Activated naive CD4-positive, alpha-beta T cell treated with anti-CD3 and anti-CD28 coated beads, Interleukin-2, amount 10 ng/mL, durations not matched to agents 7 days and 5 days (primary cell): ENCODE measurements at regions of chr12 and their contacts with region 1.

Region 1: GRCh38 chr12:100154474-100155247 is 12.0 kb upstream of the BLTP3B start:
- DNase-seq: peak; percentile 82
- H3K4me3 Mint-ChIP-seq: no peak overlapping the region
- H3K27ac Mint-ChIP-seq: no peak overlapping the region
- H3K4me1 Mint-ChIP-seq: peaks cover 6% of the 10 kb centered on the region
- H3K27me3 Mint-ChIP-seq: no peaks in the 10 kb centered on the region

Region 2: DNA sequence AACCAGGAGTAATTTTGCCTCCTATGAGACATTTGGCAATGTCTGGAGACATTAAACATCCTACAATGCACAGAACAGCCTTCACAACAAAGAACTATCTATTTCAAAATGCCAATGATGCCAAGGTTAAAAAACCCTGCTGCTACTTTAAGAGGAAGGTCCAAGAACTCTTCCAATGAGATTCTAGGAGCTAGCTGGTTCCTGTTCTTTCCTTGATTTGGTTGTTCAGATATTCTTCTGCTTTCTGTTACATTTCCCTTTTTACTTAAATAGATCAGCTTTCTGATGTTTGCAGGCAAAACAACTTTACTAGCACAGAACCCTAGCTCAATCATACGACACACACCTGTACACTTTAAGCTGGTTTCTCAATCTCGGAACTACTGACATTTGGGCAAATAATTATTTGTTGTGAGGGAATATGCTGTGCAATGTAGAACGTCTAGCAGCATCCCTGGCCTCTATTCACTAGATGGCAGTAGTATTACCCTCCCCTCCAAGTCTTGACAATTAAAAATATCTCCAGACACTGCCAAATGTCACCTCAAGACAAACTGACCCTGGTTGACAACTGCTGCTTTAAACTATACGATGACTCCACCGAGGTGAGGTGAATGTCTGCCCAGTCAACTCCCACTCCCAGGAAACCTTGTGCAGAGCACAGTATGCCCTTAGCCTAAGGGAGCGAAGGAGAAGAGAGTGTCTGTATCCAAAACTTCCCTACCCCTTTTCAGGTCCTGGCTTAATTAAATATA is 16.4 kb before region 1 on chr12:
- CTCF ChIA-PET with region 1: interaction called, 12 read pairs
- DNase-seq: no peak
- H3K4me3 Mint-ChIP-seq: no peak overlapping the region
- H3K27ac Mint-ChIP-seq: no peak overlapping the region
- H3K4me1 Mint-ChIP-seq: peaks cover 41% of the 10 kb centered on the region
- H3K27me3 Mint-ChIP-seq: no peaks in the 10 kb centered on the region

Region 3: DNA sequence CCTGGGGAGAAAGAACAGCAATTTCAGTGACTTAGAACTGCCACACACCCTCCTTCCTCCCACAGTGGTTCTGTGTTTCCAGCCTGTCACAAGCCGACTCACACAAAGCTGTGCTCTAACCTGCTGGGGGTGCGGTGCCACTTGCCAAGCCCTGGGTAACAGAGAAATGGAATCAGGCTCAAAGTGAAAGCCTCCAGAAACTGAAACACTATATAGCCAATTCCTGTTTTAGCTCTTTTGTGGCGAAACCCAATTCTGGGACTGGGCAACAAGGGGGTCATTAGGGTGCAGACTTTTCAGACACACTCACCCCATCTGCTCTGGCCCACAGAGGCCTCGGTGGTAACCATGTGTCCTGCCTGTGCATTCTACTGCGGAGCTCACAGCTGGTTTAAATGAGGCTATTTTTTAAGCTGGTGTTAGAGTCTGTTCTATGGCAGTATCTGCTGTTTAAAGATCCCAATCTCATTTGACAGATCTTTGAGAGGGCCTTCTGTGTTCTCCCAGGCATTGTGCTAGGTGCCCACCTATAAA is 30.8 kb after region 1 on chr12:
- CTCF ChIA-PET with region 1: interaction called, 10 read pairs
- DNase-seq: no peak
- H3K4me3 Mint-ChIP-seq: no peak overlapping the region
- H3K27ac Mint-ChIP-seq: no peak overlapping the region
- H3K4me1 Mint-ChIP-seq: peaks cover 13% of the 10 kb centered on the region
- H3K27me3 Mint-ChIP-seq: no peaks in the 10 kb centered on the region